Mucosa of descending colon (tissue), 3 donors: ENCODE measurements at regions of chr11 and their contacts with region 1.

Region 1: GRCh38 chr11:47152953-47153950 is 23.4 kb downstream of the ARFGAP2 start:
- DNase-seq: peak; percentile 71 to 92 (median 91)
- ATAC-seq: peak; percentile 89
- H3K4me3 ChIP-seq: no peak overlapping the region
- H3K4me1 ChIP-seq: peaks cover 20% of the 10 kb centered on the region
- CTCF ChIP-seq: peak; percentile 89

Region 2: DNA sequence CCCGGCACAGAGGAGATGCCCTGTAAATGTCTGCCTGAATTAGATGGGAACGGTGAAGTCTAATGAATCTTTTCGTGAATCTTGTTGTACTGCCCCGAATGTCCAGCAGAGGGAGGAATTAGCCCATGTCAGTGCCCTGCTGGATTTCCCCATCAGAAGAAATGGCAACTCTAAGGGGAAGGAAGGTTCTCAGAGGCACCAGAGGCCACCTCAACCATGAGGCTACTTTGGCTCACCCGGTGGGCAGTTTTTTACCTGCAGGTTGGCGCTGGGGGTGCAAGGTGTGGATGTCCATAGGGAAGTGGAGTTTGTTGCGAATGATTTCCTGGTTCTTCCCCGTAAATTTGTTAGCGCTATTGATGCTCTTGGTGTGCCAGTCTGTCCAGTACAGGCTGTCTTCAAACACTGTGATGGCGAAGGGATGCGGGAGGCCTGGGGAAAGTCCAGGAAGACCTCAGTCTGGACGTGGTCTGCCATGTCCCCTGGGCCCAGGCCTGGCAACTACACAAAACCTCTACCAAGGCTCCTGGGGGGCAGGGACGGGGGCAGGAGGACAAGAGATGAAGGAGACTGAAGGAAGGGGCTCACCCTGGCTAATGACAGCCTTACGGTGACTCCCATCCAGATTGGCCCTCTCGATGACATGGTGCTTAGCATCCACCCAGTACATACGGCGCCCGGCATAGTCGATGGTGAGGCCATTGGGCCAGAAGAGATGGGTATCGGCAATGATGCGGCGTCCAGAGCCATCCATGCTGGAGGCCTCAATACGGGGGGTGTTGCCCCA is 263.4 kb before region 1 on chr11:
- intact Hi-C with region 1: loop called (anchors 2 to 5 kb)
- DNase-seq: peak in 2 of 3 donors; percentile 43 to 94
- ATAC-seq: peak; percentile 94
- H3K4me3 ChIP-seq: no peak overlapping the region
- H3K4me1 ChIP-seq: no peaks in the 10 kb centered on the region
- CTCF ChIP-seq: peak; percentile 73

Region 3: DNA sequence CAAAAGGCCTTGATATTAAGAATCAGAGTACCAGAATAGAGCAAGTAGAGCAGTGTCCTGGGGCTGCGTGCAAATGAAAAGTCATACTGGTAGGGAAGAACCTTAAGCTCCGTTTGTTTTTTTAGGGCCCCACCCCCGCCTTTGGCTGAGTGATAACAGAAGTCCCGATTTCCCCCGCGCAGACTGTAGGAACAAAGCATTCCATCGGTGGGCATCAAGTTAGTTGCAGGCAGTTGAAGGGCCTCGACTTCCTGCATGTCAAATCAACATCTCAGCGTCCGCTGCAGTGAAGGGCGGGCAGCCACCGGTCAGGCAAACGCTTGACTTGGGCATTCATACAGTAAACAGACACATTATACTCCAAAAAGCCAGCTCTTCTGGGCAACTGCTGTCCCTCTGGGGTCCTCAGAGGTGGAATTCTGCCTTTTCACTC is 246.6 kb before region 1 on chr11:
- intact Hi-C with region 1: loop called (anchors 5 to 10 kb)
- DNase-seq: no peak
- ATAC-seq: no peak
- H3K4me3 ChIP-seq: no peak overlapping the region
- H3K4me1 ChIP-seq: no peaks in the 10 kb centered on the region
- CTCF ChIP-seq: no peak

Region 4: DNA sequence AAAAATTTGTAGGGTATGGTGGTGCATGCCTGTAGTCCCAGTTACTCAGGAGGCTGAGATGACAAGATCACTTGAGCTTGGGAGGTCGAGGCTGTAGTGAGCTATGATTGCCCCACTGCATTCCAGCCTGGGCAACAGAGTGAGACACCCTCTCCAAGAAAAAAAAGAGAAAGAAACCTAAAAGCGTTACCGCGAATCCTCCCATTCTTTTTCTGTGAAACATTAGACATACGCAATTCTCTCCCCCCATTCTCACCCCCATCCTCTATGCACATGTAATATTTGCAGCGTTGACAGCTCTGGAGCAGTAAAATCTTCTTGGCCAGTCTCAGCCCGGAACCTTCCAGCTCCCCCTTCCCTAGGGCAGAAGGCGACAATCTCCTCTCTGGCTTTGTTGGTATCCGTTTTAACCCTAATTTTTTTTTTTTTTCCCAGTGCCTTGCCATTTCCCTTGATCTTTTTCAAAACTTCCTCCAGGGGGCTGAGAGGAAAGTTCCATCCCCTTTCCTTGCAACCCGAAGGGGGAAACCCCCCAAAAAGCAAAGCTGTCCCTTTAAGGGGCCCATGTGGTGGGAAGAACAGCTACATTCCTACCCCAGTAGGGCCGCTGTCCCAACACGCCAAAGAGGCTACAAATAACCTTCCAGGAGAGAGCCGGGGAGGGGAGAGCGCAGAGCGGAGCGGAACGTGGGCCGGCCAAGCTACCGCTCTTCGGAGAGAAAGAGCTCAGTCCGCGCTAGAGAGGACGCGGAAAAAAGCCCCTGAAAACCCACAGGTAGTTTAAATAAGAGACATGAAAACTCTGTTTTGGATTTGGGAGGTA is 236.8 kb before region 1 on chr11:
- intact Hi-C with region 1: loop called in 1 of 2 experiments (anchors 10 kb)
- DNase-seq: peak in 2 of 3 donors; percentile 43 to 55
- ATAC-seq: peak; percentile 51
- H3K4me3 ChIP-seq: no peak overlapping the region
- H3K4me1 ChIP-seq: peaks cover 12% of the 10 kb centered on the region
- CTCF ChIP-seq: no peak

Region 5: GRCh38 chr11:47083913-47084312 is 69.3 kb before region 1 on chr11:
- intact Hi-C with region 1: no loop called
- DNase-seq: no peak
- ATAC-seq: no peak
- H3K4me3 ChIP-seq: no peak overlapping the region
- H3K4me1 ChIP-seq: no peaks in the 10 kb centered on the region
- CTCF ChIP-seq: no peak